ENCODE measurements at regions of chr3 and their contacts with region 1.

Region 1: DNA sequence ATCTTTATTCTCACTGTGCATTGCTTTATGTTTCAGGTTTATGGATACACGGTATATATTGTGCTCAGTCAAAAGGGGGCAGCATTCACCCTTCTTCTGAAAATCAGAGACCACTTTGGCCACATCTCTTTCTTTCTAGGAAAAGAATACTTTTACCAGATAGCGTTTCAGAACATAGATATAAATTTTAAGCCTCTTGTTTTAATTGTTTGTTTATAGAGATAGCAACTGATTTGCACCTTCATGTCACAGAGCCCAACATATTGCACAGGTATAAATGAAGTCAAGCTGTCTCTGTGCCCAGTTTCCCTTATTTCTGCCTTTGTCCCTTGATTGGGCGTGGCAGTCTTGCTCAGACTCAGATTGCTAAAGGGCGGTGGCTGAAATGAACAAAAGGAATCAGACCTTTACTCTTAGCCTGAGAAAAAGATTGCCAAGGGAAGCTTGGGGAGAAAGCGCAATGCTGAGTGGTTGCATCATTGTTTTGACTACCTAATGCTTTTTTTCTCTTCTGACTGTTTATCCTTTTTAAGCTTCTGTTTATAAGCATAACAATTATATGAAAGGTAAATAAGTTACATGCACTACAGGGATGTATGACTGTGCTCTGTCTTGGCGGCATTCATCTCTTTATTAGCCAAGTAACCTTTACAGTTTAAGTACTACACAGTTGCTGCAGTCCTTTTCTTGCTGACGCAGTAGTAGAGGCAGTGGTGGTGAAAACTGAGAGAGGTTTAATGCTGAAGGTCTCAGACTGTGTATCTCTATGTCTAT is 70.8 kb upstream of the ZBTB20 start:
- DNase-seq: peak; percentile 47
- H3K4me3 ChIP-seq: no peak overlapping the region
- H3K27ac ChIP-seq: peak overlapping the region; percentile 41
- H3K27me3 ChIP-seq: no peaks in the 10 kb centered on the region
- CTCF ChIP-seq: peak; percentile 80

Region 2: GRCh38 chr3:114745322-114746240 is 472.3 kb before region 1 on chr3:
- CTCF ChIA-PET with region 1: no interaction called
- POLR2A ChIA-PET with region 1: no interaction called
- DNase-seq: no peak
- H3K4me3 ChIP-seq: no peak overlapping the region
- H3K27ac ChIP-seq: no peak overlapping the region
- H3K27me3 ChIP-seq: no peaks in the 10 kb centered on the region
- CTCF ChIP-seq: no peak

Region 3: DNA sequence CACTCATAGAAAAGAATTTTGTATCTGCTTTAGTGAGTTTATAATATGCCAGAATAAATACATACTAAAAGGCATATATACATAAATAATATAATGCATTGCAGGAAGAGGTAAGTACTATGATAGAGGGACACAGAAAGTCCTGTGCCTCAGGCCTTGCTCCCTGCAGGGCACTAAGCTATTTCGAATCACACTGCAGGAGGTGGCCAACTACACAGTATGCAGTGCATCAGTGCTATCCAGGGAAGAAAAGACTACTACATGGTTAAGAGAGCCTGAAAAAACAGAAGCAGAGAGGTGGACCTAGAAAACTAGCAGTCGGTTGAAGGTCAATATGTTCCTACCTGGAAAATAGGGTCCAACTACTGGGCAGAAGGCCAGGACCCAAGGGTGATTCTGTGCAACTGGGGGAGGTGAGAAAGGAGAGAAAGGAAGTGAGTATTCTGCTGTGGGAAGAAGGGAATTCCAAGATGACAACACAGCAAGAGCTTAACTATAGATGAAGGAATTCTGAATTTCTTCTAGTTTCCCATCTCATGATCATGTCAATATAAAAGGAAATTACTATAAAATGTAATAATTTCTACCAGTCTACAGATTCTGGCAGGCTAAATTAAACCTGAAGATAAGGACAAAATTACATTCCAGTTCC is 288.8 kb before region 1 on chr3:
- CTCF ChIA-PET with region 1: no interaction called
- POLR2A ChIA-PET with region 1: no interaction called
- DNase-seq: no peak
- H3K4me3 ChIP-seq: no peak overlapping the region
- H3K27ac ChIP-seq: no peak overlapping the region
- H3K27me3 ChIP-seq: no peaks in the 10 kb centered on the region
- CTCF ChIP-seq: no peak

Region 4: DNA sequence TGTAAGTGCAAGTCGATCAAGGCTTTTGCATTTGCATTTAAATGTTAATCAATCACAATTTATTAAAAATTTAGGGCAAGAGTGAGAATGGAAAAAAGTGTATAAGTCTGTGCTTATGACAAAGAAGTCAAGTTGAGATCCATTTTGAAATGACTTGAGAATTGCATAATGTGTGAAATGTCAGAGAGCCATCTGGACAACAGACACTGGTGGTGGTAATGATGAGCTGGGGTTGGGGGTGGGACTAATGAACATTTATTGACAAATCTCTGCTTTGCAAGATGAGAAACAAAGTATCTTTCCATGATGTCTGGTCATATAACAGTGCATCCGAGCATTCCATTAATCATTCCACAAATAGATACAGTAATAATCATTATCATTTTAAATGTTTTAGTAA is 18.6 kb after region 1 on chr3:
- CTCF ChIA-PET with region 1: interaction called, 10 read pairs
- POLR2A ChIA-PET with region 1: interaction called, 3 read pairs
- DNase-seq: no peak
- H3K4me3 ChIP-seq: no peak overlapping the region
- H3K27ac ChIP-seq: no peak overlapping the region
- H3K27me3 ChIP-seq: no peaks in the 10 kb centered on the region
- CTCF ChIP-seq: no peak

Region 5: DNA sequence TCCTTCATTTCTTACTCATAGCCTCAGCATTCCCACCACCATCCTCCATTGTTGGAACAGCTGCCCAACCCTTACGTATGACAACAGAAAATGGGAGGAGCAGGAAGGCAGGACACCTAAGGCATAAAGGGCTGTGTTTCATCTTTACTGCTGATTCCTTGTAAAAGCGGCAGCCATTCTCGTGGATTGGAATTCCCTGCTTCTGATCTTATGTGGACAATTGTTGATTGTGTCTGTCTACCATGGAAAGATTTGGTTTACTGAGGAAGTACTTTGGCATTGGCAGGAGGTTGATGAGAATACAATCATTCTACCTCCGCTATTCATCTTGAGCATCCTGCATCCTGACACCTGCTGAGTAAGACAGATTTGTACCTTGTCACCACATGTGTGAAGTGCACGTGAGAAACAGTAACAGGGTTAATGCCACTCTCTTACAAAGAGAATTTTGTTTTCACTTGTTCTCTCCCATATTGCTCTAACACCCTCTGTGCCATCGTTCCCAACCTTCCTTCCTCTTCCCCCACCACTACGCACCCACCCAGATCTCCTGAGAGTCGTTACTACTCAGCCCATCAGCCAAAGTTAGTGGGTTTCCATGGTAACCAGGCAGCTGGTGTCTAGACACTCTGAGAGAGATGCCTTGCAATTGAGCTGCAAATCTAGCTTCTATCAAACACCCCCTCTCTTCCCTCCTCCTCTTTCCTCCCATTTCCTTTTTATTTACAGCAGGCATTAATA is 481.2 kb after region 1 on chr3:
- CTCF ChIA-PET with region 1: interaction called, 60 read pairs
- POLR2A ChIA-PET with region 1: no interaction called
- DNase-seq: no peak
- H3K4me3 ChIP-seq: no peak overlapping the region
- H3K27ac ChIP-seq: no peak overlapping the region
- H3K27me3 ChIP-seq: no peaks in the 10 kb centered on the region
- CTCF ChIP-seq: no peak

Region 6: DNA sequence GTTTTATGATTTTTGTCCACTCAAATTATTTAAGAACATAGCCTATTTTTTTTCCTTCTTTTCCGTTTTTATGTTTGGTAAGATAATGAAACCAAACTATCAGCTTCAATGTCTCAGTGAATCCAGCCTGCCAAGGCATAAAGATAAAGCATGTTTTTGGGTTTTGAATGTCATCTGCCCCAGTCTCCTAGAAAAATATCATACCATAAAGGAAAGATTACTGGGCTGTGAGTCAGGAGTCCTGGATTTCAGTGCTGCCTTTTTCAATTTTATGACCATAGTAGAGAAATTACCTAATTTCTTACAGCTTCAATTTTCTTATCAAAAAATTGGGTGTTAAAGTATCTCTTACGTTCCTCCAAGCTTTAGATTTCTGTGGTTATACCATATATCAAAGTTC is 492.9 kb after region 1 on chr3:
- CTCF ChIA-PET with region 1: interaction called, 16 read pairs
- POLR2A ChIA-PET with region 1: no interaction called
- DNase-seq: no peak
- H3K4me3 ChIP-seq: no peak overlapping the region
- H3K27ac ChIP-seq: no peak overlapping the region
- H3K27me3 ChIP-seq: no peaks in the 10 kb centered on the region
- CTCF ChIP-seq: no peak

Region 7: GRCh38 chr3:115814778-115815380 is 597.0 kb after region 1 on chr3:
- CTCF ChIA-PET with region 1: interaction called, 60 read pairs
- POLR2A ChIA-PET with region 1: no interaction called
- DNase-seq: no peak
- H3K4me3 ChIP-seq: no peak overlapping the region
- H3K27ac ChIP-seq: no peak overlapping the region
- H3K27me3 ChIP-seq: no peaks in the 10 kb centered on the region
- CTCF ChIP-seq: peak; percentile 91

Measured in AG04450 (cell line).